ENCODE measurements at regions of chr6 and their contacts with region 1.

Region 1: DNA sequence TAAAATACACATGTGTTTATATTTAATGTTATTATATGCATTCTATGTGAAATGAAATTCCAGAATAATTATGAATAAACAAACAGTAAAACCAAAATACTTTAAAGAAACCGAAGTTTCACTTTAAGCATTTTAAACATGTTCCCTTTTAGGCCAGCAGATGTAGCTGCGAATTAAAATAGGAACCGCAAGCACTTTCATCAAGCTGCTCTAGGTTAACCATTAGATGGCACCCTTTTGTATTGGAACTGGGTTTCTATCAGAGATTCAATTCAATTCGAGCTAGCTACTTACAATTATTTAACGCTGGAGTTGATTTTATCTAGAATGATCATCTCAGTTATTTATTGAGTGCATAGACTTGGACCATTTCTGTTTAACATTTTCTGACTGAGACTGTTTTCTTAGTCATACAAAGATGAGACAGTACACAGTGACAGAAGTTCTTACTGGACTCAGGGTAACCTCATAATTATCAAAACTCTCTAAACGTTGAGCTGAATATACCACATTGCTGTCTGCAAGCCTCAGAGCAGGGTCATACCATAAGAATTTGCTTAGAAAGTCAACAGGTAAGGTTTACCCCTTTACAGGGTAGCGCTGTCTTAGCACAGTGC is 8.5 kb downstream of the TMEM242 start:
- DNase-seq: peak; percentile 69
- H3K4me3 ChIP-seq: no peak overlapping the region; a peak in 1 of 4 replicates
- H3K27ac ChIP-seq: peak overlapping the region in 1 of 2 experiments; percentile 27; a peak in 2 of 4 replicates
- H3K4me1 ChIP-seq: no peaks in the 10 kb centered on the region; a peak in 2 of 4 replicates
- H3K27me3 ChIP-seq: no peaks in the 10 kb centered on the region
- CTCF ChIP-seq: peak; percentile 95
- EP300 ChIP-seq: no peak
- RAD21 ChIP-seq: peak; percentile 95

Region 2: GRCh38 chr6:157281570-157281969 is 33.2 kb before region 1 on chr6:
- CTCF ChIA-PET with region 1: no interaction called
- POLR2A ChIA-PET with region 1: no interaction called
- DNase-seq: peak; percentile 50
- H3K4me3 ChIP-seq: no peak overlapping the region
- H3K27ac ChIP-seq: no peak overlapping the region
- H3K4me1 ChIP-seq: no peaks in the 10 kb centered on the region; a peak in 1 of 4 replicates
- H3K27me3 ChIP-seq: no peaks in the 10 kb centered on the region
- CTCF ChIP-seq: peak; percentile 32; the same call in 1 of the 2 replicates
- EP300 ChIP-seq: no peak
- RAD21 ChIP-seq: no peak

Region 3: DNA sequence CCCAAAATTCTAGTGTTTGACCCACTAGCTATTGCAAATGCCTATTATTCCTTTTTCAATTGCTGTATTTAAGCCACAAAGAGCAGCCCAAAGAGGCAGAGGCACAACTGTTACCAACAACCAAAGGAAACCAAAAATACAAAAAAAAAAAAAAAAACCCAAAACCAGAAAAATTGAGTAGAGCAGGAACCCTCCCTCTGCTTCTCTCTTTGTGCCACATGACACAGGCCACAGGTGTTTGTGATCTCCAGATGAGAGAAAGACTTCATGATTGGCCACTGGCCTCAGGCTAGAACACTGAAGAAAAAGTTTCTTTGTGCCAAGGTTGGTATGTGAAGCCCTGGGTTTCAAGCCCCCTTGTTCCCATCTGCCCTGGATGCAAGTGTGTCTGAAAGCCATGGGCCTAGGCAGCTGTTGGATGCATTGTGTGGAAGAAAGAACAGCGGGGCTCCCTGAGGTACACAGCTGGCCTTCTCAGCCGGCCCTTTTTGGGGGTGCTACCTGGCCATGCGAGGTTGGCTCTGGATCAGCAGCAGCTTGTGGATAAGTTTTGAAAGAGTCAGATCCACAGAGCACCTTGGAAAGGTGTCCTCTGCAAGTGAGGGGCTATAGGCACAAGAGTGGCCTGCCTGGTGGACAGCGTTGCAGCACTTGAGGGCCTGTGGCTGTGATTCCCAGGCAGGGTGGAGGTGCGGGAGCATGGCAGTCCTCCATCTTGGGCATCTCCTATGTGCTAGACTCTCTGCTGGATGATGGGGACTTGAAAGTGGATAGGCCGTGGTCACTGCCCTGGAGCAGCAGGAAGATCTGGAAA is 270.7 kb after region 1 on chr6:
- CTCF ChIA-PET with region 1: no interaction called
- POLR2A ChIA-PET with region 1: no interaction called
- DNase-seq: no peak
- H3K4me3 ChIP-seq: no peak overlapping the region
- H3K27ac ChIP-seq: no peak overlapping the region
- H3K4me1 ChIP-seq: no peaks in the 10 kb centered on the region
- H3K27me3 ChIP-seq: no peaks in the 10 kb centered on the region
- CTCF ChIP-seq: no peak
- EP300 ChIP-seq: no peak
- RAD21 ChIP-seq: no peak

Region 4: GRCh38 chr6:157597446-157598312 is 282.9 kb after region 1 on chr6:
- CTCF ChIA-PET with region 1: interaction called, 20 read pairs
- POLR2A ChIA-PET with region 1: no interaction called
- DNase-seq: peak; percentile 75
- H3K4me3 ChIP-seq: no peak overlapping the region
- H3K27ac ChIP-seq: no peak overlapping the region
- H3K4me1 ChIP-seq: no peaks in the 10 kb centered on the region; a peak in 1 of 4 replicates
- H3K27me3 ChIP-seq: no peaks in the 10 kb centered on the region
- CTCF ChIP-seq: peak; percentile 55
- EP300 ChIP-seq: no peak
- RAD21 ChIP-seq: peak; percentile 80

Measured in SK-N-SH (cell line).